ENCODE measurements at regions of chr13 and their contacts with region 1.

Region 1: GRCh38 chr13:21075011-21075898 is 13.9 kb upstream of the LATS2 start:
- DNase-seq: peak; percentile 19
- H3K4me3 Mint-ChIP-seq: peak overlapping the region; percentile 61
- H3K27ac Mint-ChIP-seq: no peak overlapping the region
- H3K4me1 Mint-ChIP-seq: peaks cover 27% of the 10 kb centered on the region
- H3K27me3 Mint-ChIP-seq: peaks cover 27% of the 10 kb centered on the region

Region 2: GRCh38 chr13:20512042-20512683 is 563.1 kb before region 1 on chr13:
- intact Hi-C with region 1: no loop called
- DNase-seq: no peak
- H3K4me3 Mint-ChIP-seq: no peak overlapping the region
- H3K27ac Mint-ChIP-seq: no peak overlapping the region
- H3K4me1 Mint-ChIP-seq: no peaks in the 10 kb centered on the region
- H3K27me3 Mint-ChIP-seq: no peaks in the 10 kb centered on the region

Region 3: GRCh38 chr13:20924758-20925394 is 150.4 kb before region 1 on chr13:
- intact Hi-C with region 1: no loop called
- DNase-seq: peak; percentile 41
- H3K4me3 Mint-ChIP-seq: no peak overlapping the region
- H3K27ac Mint-ChIP-seq: no peak overlapping the region
- H3K4me1 Mint-ChIP-seq: no peaks in the 10 kb centered on the region
- H3K27me3 Mint-ChIP-seq: no peaks in the 10 kb centered on the region

Region 4: DNA sequence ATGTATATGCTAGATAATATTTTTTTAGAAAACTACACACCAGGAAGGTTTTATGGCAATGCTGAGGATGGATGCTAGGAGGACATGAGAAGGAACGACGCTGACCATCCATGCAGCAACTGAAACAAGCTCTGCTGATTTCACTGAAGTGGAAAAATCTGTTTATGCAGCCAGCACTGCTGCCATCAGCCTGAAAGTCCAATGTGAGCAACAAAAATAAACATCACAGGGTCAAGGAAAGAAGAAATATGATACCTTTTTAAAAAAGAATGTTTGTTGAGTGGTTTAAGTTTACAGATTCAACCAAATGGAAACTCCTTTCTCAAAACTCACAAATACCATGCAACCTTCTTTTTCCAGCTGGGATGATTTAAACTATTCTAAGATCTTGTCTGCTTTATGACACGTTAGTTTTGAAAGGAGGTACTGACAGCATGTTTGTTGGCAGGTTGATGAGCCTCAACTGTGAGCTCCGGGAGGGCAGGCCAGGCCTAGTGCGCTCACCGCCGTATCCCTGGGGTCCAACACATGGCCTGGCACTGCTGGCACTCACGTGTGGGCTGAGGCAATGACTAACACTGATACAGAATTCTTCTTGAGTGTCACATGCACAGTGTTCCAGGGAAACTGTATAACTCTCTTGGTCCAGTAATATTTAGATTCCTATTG is 60.6 kb before region 1 on chr13:
- intact Hi-C with region 1: loop called (anchors 5 kb)
- DNase-seq: no peak
- H3K4me3 Mint-ChIP-seq: no peak overlapping the region
- H3K27ac Mint-ChIP-seq: no peak overlapping the region
- H3K4me1 Mint-ChIP-seq: peaks cover 31% of the 10 kb centered on the region
- H3K27me3 Mint-ChIP-seq: no peaks in the 10 kb centered on the region

Region 5: DNA sequence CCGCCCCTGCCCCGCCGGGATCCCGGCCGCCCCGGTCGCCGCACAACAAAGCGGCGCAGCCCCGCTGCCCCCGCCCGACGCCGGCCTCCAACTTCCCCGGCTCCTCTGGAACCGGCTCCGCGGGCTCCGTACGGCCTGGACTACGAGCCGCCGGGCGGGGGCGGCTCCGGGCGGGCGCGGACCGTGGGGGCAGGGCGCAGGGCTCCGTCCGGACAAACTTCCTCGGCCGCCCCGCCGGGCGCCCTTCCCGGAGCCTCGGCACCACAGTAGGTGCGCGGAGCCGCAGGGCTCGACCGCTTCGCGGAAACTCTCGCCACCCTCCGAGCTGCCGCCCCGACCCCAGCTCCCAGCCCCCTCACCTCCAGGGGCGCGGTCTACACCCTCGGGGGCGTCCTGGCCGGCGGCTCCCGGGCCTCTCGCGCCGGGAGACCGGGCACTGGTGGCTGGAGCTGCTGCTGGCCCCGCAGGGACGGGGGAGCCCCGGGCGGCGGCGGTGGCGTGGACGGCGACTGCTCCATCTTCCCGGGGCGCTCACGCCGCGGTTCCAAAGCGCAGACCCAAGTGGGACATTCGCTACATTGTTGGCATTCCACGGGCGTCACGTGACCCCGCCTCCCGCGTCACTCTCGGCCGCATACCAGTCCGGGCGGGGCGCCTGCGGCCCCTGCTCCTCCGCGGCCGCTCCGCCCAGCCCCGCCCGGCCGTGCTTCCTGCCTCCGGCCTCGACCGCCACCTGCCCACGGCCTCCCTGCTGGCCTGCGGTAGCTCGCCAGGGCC is 14.1 kb before region 1 on chr13 and contains the start of gene LATS2:
- intact Hi-C with region 1: loop called (anchors 2 kb)
- DNase-seq: peak; percentile 49
- H3K4me3 Mint-ChIP-seq: peak within 1 kb of the TSS; percentile 80
- H3K27ac Mint-ChIP-seq: no peak within 1 kb of the TSS
- H3K4me1 Mint-ChIP-seq: peaks cover 4% of the 10 kb centered on the region
- H3K27me3 Mint-ChIP-seq: peaks cover 39% of the 10 kb centered on the region
- total RNA-seq, gene LATS2: 2.6 and 2.7 TPM in 2 replicates

Measured in activated T-helper 2 cell treated with anti-CD3 and anti-CD28 coated beads, Interferon-gamma antibody, Interleukin-2, Interleukin-4, amounts not matched to agents 10 μg/mL and 5 μg/mL and 100 μg/mL, durations not matched to agents 14 hours and 24 hours and 36 hours (primary cell).